Activated CD4-positive, alpha-beta T cell treated with anti-CD3 and anti-CD28 coated beads, Interleukin-2, amount 10 ng/mL, durations not matched to agents 24 days and 14 days (primary cell): ENCODE measurements at regions of chr1 and their contacts with region 1.

Region 1: GRCh38 chr1:59007820-59008598 is 224.2 kb upstream of the JUN start:
- DNase-seq: peak; percentile 66
- H3K4me3 Mint-ChIP-seq: peak overlapping the region; percentile 64
- H3K27ac Mint-ChIP-seq: peak overlapping the region; percentile 90
- H3K4me1 Mint-ChIP-seq: peaks cover 50% of the 10 kb centered on the region
- H3K27me3 Mint-ChIP-seq: no peaks in the 10 kb centered on the region

Region 2: DNA sequence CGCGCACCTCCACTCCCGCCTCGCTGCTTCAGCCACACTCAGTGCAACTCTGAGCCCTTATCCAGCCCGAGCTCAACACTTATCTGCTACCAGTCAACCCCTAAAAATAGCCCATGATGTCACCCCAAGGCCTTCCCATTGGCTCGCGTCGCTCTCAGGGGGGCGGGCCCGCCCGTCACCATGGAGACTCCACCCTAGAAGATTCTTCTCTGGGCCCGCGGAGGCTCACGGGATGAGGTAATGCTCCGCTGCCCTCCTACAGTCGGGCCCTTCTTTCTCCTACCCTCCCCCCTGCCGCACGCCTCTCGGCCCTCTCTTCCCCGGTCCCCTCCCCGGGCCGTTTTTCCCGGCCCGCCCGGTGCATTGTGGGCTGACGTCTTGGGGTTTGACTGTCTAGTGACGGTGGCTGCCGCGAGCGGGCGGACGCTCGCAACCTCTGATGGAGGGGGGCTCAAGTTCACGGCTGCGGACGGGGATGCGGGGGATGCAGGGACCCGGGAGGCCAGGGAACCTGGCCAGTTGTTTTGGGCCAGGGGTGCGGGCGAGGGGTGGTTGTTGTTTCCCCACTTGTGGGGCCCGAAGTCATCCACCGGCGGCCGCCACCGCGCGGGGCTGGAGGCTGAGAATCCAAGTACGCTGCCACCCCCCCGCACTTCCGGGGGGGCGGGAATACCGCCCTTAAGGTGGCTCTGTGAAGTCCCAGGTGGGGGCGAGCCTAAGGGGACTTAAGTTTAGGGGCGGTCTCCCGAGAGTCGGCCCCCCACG is 223.8 kb before region 1 on chr1 and contains the start of gene JUN:
- intact Hi-C with region 1: loop called (anchors 1 kb)
- DNase-seq: peak; percentile 99
- H3K4me3 Mint-ChIP-seq: peak within 1 kb of the TSS; percentile 97
- H3K27ac Mint-ChIP-seq: peak within 1 kb of the TSS; percentile 99
- H3K4me1 Mint-ChIP-seq: peaks cover 36% of the 10 kb centered on the region
- H3K27me3 Mint-ChIP-seq: peaks cover 7% of the 10 kb centered on the region
- total RNA-seq, gene JUN: 51.6 and 52.6 TPM in 2 replicates

Region 3: GRCh38 chr1:58903514-58904298 is 104.3 kb before region 1 on chr1:
- intact Hi-C with region 1: loop called (anchors 5 kb)
- DNase-seq: peak; percentile 94
- H3K4me3 Mint-ChIP-seq: peak overlapping the region; percentile 80
- H3K27ac Mint-ChIP-seq: peak overlapping the region; percentile 91
- H3K4me1 Mint-ChIP-seq: peaks cover 20% of the 10 kb centered on the region
- H3K27me3 Mint-ChIP-seq: no peaks in the 10 kb centered on the region

Region 4: DNA sequence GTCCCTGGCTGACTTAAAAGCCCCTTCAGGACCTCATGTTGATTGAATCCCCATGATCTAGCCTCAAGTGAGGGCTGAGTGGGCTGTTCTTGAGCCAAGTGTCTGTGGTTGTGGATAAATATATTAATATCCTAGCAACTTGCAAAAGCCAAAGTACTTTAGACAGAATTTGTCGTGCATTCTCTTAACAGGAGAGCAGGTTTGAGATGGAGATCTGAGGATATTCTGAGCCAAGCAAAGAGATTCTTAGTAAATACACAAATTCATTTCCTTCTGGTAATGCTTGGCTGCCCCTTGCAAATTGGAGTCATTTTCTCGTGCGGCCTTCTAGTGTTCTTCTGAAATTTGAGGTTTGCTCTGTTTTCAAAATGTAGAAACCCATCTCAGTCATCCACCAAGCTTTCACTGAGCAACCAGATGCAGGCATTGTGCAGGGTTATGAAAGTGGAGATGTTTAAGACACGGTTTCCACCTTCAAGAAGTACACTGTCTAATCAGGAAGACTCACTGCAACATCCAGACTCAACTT is 18.0 kb after region 1 on chr1:
- intact Hi-C with region 1: loop called (anchors 1 kb)
- DNase-seq: no peak
- H3K4me3 Mint-ChIP-seq: peak overlapping the region; percentile 75
- H3K27ac Mint-ChIP-seq: no peak overlapping the region
- H3K4me1 Mint-ChIP-seq: peaks cover 35% of the 10 kb centered on the region
- H3K27me3 Mint-ChIP-seq: no peaks in the 10 kb centered on the region

Region 5: GRCh38 chr1:59296358-59297256 is 288.6 kb after region 1 on chr1 and contains the start of gene FGGY:
- intact Hi-C with region 1: loop called (anchors 5 kb)
- DNase-seq: peak; percentile 96
- H3K4me3 Mint-ChIP-seq: peak within 1 kb of the TSS; percentile 85
- H3K27ac Mint-ChIP-seq: peak within 1 kb of the TSS; percentile 91
- H3K4me1 Mint-ChIP-seq: peaks cover 36% of the 10 kb centered on the region
- H3K27me3 Mint-ChIP-seq: no peaks in the 10 kb centered on the region
- total RNA-seq, gene FGGY: 6.2 and 8.1 TPM in 2 replicates

Region 6: GRCh38 chr1:59477286-59477685 is 469.3 kb after region 1 on chr1:
- intact Hi-C with region 1: loop called (anchors 5 kb)
- DNase-seq: peak; percentile 79
- H3K4me3 Mint-ChIP-seq: peak overlapping the region; percentile 32
- H3K27ac Mint-ChIP-seq: peak overlapping the region; percentile 75
- H3K4me1 Mint-ChIP-seq: peaks cover 19% of the 10 kb centered on the region
- H3K27me3 Mint-ChIP-seq: no peaks in the 10 kb centered on the region

Region 7: GRCh38 chr1:59892841-59893811 is 885.1 kb after region 1 on chr1:
- intact Hi-C with region 1: no loop called
- DNase-seq: no peak
- H3K4me3 Mint-ChIP-seq: peak overlapping the region; percentile 7
- H3K27ac Mint-ChIP-seq: no peak overlapping the region
- H3K4me1 Mint-ChIP-seq: peaks cover 7% of the 10 kb centered on the region
- H3K27me3 Mint-ChIP-seq: no peaks in the 10 kb centered on the region